Dorsolateral prefrontal cortex (tissue), 120 donors: ENCODE measurements at regions of chr4 and their contacts with region 1.

Region 1: DNA sequence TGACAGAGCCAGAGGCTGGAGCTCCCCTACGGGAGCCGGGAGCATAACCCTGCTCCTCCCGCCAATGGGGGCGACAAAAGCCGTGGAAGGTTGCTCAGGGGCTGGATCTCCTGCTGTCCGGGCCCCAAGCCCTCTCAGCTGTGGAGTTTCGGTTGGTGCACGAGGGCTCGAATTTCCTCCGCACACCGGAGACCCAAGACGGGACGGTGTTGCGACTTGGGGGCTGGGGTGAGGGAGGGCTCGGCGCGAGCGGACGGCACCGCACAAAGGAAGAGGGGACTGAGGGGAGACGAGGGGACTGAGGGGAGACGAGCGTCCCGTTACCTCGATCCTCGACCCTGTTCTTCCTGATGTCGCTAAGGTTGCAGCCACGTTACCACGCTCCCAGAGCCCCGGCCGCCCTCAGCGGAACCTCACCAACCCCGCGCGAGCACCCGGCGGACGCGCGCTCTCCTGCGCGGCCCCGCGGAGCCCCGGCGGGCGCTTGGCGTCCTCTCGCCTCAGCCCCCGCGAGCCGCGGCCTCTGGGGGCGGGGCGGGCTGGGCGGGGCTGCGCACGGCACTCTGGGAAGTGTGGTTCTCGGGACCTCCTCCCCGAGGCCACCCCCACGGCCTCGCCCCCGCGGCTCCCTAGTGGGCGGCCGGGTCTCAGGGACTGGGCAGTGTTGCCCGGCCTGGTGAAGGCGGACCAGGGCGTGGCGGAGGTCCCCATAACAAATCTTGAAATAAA is at the start of gene KLHL8:
- DNase-seq: peak; percentile 69 to 95 (median 82)
- H3K4me3 ChIP-seq: peak within 1 kb of the TSS; percentile 61 to 99 (median 91)
- H3K27ac ChIP-seq: peak within 1 kb of the TSS; percentile 62 to 96 (median 90)
- H3K27me3 ChIP-seq: no peaks in the 10 kb centered on the region
- CTCF ChIP-seq: peak in 44 of 56 donors; percentile 1 to 54 (median 23)
- total RNA-seq, gene KLHL8: 16.5 to 29.8 (median 21.6) TPM

Region 2: GRCh38 chr4:86544310-86544966 is 675.8 kb before region 1 on chr4:
- intact Hi-C with region 1: no loop called
- DNase-seq: no peak
- H3K4me3 ChIP-seq: no peak overlapping the region
- H3K27ac ChIP-seq: peak overlapping the region in 7 of 59 donors; percentile 20 to 67 (median 42)
- H3K27me3 ChIP-seq: no peaks in the 10 kb centered on the region
- CTCF ChIP-seq: no peak

Region 3: GRCh38 chr4:87150498-87151261 is 69.6 kb before region 1 on chr4:
- intact Hi-C with region 1: loop called in 1 of 2 experiments (anchors 5 kb)
- DNase-seq: peak in 2 of 10 donors; percentile 35 to 48
- H3K4me3 ChIP-seq: no peak overlapping the region
- H3K27ac ChIP-seq: no peak overlapping the region
- H3K27me3 ChIP-seq: no peaks in the 10 kb centered on the region
- CTCF ChIP-seq: peak; percentile 86 to 99 (median 94)